IMR-90 (cell line): ENCODE measurements at regions of chr11 and their contacts with region 1.

Region 1: GRCh38 chr11:2293984-2294925 is 7.5 kb downstream of the C11orf21 start:
- DNase-seq: no peak
- ATAC-seq: no peak
- H3K4me3 ChIP-seq: no peak overlapping the region
- H3K27ac ChIP-seq: no peak overlapping the region
- H3K4me1 ChIP-seq: no peaks in the 10 kb centered on the region
- H3K27me3 ChIP-seq: peaks cover 37% of the 10 kb centered on the region
- CTCF ChIP-seq: no peak
- POLR2A ChIP-seq: no peak
- RAD21 ChIP-seq: no peak

Region 2: DNA sequence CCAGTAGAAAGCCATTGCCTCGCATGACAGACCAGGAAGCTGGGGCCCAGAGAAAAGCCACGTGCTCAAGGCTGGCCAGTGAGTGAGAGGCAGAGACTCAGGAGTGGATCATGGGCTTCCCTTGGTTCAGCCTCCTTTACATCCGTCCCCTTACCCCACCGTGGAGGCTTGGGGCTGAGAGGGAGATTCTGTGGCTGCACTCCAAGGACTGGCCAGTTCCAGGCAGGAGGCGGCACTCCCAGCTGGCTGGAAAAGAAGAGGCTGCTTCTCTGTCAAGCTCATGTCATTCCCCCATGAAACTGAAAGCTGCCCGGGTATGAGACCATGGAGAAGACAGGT is 17.3 kb before region 1 on chr11:
- CTCF ChIA-PET with region 1: no interaction called
- POLR2A ChIA-PET with region 1: interaction called, 10 read pairs
- dilution Hi-C with region 1: no loop called
- in situ Hi-C with region 1: no loop called
- intact Hi-C with region 1: no loop called
- DNase-seq: no peak
- ATAC-seq: no peak; the same call in 1 of the 2 replicates
- H3K4me3 ChIP-seq: no peak overlapping the region
- H3K27ac ChIP-seq: no peak overlapping the region
- H3K4me1 ChIP-seq: no peaks in the 10 kb centered on the region
- H3K27me3 ChIP-seq: peaks cover 53% of the 10 kb centered on the region
- CTCF ChIP-seq: no peak
- POLR2A ChIP-seq: no peak
- RAD21 ChIP-seq: no peak